Thyroid gland (tissue), 4 donors: ENCODE measurements at regions of chr5 and their contacts with region 1.

Region 1: DNA sequence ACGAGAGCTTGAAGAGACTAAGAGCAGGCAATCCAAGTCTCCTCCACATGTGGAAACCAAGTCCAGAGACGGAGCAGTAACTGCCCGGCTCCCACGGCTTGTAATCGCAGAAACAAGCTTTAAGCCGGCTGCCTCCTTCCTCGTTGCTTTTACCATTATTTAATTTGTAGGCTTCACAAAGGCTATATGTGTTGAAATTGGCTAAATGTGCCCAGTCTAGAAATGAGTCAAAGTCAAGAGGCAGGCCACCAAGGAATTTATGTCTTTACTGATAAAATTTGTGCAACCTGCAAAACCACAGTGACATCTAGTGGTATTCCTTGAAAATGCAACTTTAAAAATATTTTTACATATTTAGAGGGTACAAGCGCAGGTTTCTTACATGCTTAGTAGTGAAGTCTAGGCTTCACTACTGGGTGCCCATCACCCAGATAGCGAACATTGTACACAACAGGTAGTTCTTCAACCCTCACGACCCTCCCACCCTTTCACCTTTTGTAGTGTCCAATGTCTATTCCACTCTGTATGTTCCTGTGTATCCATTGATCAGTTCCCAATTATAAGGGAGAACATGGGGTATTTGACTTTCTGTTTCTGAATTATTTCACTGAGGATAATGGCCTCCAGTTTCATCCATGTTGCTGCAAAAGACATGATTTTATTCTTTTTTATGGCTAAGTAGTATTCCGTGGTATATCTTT is 33.5 kb upstream of the EBF1 start:
- DNase-seq: no peak
- H3K4me3 ChIP-seq: no peak overlapping the region
- H3K27ac ChIP-seq: no peak overlapping the region
- H3K4me1 ChIP-seq: no peaks in the 10 kb centered on the region
- H3K27me3 ChIP-seq: no peaks in the 10 kb centered on the region
- CTCF ChIP-seq: peak; percentile 53 to 79 (median 58)
- POLR2A ChIP-seq: no peak

Region 2: DNA sequence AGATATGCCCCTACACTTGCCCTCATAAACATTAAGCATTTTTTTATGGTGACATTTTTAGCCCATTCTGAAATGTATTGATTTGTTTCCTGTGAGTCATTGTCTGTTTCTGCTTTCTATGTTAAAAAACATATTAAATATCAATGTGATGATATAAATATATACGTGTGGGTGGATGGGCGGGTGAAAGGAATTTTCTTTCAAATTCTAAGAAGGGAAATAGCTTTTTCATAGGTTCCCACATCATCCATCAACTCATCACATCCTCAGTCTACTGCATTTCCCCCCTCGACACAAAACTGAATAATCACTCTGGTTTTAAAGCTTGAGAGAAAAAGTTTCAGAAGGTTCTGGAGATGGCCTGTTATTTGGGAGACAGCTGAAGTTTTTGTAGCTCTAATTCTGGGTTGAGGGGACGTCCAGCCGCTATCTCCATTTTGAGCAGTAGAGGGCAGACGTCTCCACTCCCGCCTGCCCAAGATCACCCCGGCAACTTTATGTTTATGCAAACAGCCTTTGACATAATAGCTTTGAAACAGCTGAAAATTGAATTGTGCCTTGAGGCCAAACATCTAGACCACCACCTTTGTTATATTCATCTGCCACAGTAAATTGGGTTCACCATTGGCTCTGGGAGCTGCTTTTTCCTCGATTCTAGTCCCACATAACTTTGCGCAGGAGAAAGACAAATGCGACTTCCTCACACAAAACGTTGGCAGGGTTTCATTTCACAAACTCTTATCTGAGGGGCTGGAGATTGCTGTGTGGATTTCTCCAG is 1058.0 kb before region 1 on chr5:
- intact Hi-C with region 1: loop called (anchors 10 kb)
- DNase-seq: peak; percentile 33 to 46
- H3K4me3 ChIP-seq: no peak overlapping the region
- H3K27ac ChIP-seq: peak overlapping the region in 1 of 3 donors; percentile 24
- H3K4me1 ChIP-seq: no peaks in the 10 kb centered on the region
- H3K27me3 ChIP-seq: no peaks in the 10 kb centered on the region
- CTCF ChIP-seq: peak; percentile 44 to 87 (median 58)
- POLR2A ChIP-seq: no peak

Region 3: GRCh38 chr5:159061179-159061796 is 71.9 kb before region 1 on chr5:
- intact Hi-C with region 1: no loop called
- DNase-seq: peak in 1 of 2 donors; percentile 13
- H3K4me3 ChIP-seq: no peak overlapping the region
- H3K27ac ChIP-seq: peak overlapping the region in 2 of 3 donors; percentile 10 to 33
- H3K4me1 ChIP-seq: peaks cover 0 to 6% of the 10 kb centered on the region in 2 donors
- H3K27me3 ChIP-seq: no peaks in the 10 kb centered on the region
- CTCF ChIP-seq: no peak
- POLR2A ChIP-seq: no peak